AG04449 (cell line): ENCODE measurements at regions of chr11 and their contacts with region 1.

Region 1: GRCh38 chr11:75022759-75023396 is 34.1 kb downstream of the NEU3 start:
- DNase-seq: peak; percentile 28
- H3K4me3 ChIP-seq: no peak overlapping the region
- CTCF ChIP-seq: peak; percentile 96

Region 2: GRCh38 chr11:74748211-74749127 is 274.4 kb before region 1 on chr11 and contains the start of gene RNF169:
- CTCF ChIA-PET with region 1: no interaction called
- POLR2A ChIA-PET with region 1: no interaction called
- DNase-seq: peak; percentile 79
- H3K4me3 ChIP-seq: peak within 1 kb of the TSS; percentile 73
- CTCF ChIP-seq: no peak

Region 3: DNA sequence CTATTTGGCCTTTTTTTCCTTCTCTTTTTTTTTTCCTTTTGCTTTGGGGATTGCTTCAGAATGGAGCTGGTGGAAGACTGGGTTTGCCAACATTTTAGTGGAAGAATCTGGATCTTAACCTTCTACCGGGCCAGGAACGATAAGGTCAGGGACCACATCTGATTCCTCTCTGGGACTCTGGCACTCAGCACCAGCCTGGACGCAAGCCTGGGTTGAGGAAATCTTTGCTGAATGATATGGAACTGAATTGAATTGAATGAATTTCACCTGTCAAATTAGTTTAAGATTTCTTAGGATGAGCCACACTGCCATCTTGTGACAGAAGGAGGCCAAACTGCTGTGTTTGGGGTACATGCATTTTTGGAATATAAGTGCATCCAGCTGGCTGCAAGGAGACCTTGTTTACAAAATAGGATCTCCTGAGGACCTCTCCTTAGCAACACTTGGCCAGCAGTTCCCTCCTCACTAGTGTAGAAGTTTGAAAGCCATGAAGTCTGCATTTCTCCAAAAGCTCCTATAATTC is 248.1 kb after region 1 on chr11:
- CTCF ChIA-PET with region 1: interaction called, 17 read pairs
- POLR2A ChIA-PET with region 1: no interaction called
- DNase-seq: no peak
- H3K4me3 ChIP-seq: no peak overlapping the region
- CTCF ChIP-seq: peak; percentile 5